ENCODE measurements at regions of chr1 and their contacts with region 1.

Region 1: GRCh38 chr1:26279456-26280332 is at the start of gene SH3BGRL3:
- DNase-seq: peak; percentile 77
- ATAC-seq: peak; percentile 60
- H3K4me3 Mint-ChIP-seq: peak within 1 kb of the TSS; percentile 88
- H3K27ac Mint-ChIP-seq: peak within 1 kb of the TSS; percentile 85
- H3K4me1 Mint-ChIP-seq: peaks cover 82% of the 10 kb centered on the region
- H3K27me3 Mint-ChIP-seq: no peaks in the 10 kb centered on the region
- CTCF ChIP-seq: no peak
- total RNA-seq, gene SH3BGRL3: 265 and 285 TPM in 2 replicates

Region 2: DNA sequence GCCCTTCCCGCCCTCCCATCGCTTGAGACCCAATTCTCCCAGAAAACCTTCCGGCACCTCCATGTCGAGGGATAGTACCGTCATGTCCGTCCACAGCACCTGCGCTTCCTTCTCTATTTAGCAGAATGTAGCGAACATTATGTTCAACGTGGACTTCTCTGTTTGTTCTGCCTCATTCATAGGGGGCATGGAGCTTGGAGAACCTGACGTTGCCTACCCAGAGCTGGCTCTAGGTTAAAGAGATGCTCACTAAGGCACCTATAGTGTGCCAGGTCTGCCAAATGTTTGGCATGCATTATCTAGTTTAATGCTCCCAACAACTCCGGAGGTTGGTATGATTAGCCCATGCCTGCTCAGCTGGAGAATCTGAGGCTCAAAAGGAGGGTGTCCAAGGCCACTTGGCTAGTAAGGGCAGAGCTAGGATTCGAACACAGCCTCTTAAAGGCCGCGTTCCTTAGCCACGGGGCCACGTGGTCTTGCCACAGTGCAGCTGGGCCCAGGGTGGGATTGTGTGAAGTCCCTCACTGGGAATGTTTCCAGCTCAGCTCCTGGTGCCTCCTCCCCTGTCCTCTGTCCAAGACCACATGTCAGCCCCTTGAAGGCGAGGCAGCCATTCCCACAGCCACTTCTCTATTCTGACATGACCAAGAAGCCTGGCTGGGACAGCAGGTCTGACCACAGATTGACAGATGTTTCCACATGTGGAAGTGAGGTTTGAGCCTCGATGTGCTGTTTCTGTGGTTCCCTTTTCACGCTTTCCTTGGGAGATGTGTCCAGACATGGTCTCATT is 1407.4 kb before region 1 on chr1:
- CTCF ChIA-PET with region 1: no interaction called
- POLR2A ChIA-PET with region 1: no interaction called
- intact Hi-C with region 1: no loop called
- DNase-seq: no peak
- ATAC-seq: no peak
- H3K4me3 Mint-ChIP-seq: no peak overlapping the region
- H3K27ac Mint-ChIP-seq: no peak overlapping the region
- H3K4me1 Mint-ChIP-seq: peaks cover 18% of the 10 kb centered on the region
- H3K27me3 Mint-ChIP-seq: peaks cover 27% of the 10 kb centered on the region
- CTCF ChIP-seq: no peak

Region 3: GRCh38 chr1:26233903-26234643 is 45.6 kb before region 1 on chr1 and contains the start of gene CEP85:
- CTCF ChIA-PET with region 1: interaction called, 17 read pairs
- POLR2A ChIA-PET with region 1: interaction called, 10 read pairs
- intact Hi-C with region 1: loop called (anchors 5 kb)
- DNase-seq: peak; percentile 94
- ATAC-seq: peak; percentile 88
- H3K4me3 Mint-ChIP-seq: peak within 1 kb of the TSS; percentile 98
- H3K27ac Mint-ChIP-seq: peak within 1 kb of the TSS; percentile 94
- H3K4me1 Mint-ChIP-seq: peaks cover 34% of the 10 kb centered on the region
- H3K27me3 Mint-ChIP-seq: no peaks in the 10 kb centered on the region
- CTCF ChIP-seq: no peak
- total RNA-seq, gene CEP85: 13.8 and 16.4 TPM in 2 replicates

Region 4: GRCh38 chr1:26363549-26364448 is 84.1 kb after region 1 on chr1:
- CTCF ChIA-PET with region 1: interaction called, 26 read pairs
- POLR2A ChIA-PET with region 1: no interaction called
- intact Hi-C with region 1: loop called (anchors 1 kb)
- DNase-seq: peak; percentile 81
- ATAC-seq: peak; percentile 72
- H3K4me3 Mint-ChIP-seq: no peak overlapping the region
- H3K27ac Mint-ChIP-seq: no peak overlapping the region
- H3K4me1 Mint-ChIP-seq: peaks cover 27% of the 10 kb centered on the region
- H3K27me3 Mint-ChIP-seq: peaks cover 24% of the 10 kb centered on the region
- CTCF ChIP-seq: peak; percentile 90

Region 5: DNA sequence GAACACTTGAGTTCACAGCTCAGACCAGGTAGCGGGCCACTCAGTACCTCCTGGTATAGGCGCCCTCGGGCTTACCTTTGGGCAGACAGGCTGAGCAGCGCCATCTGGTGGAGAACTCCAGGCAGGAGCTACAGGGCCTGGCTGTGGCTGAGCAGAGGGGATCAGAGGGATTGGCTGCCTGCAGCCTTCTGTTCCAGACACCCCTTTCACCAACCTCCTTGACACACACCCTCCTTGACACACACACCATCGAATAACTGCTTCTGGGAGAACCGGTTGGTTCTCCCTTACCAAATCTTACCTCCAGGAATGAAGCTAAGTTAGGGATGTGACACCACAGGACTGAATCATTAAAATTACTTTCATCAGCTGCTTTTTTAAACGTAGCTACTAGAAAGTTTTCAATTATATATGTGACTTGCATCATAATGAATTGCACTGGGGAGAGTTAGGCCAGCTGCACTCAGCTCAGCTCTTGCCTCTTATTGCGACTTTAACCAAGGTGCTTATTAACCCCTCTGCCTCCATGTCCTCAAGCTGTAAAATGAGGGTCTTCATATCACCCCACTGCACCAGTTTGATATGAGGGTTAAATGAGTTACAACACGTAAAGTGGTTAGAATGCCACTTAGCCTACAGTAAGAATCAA is 137.5 kb after region 1 on chr1:
- CTCF ChIA-PET with region 1: interaction called, 26 read pairs
- POLR2A ChIA-PET with region 1: no interaction called
- intact Hi-C with region 1: loop called (anchors 1 kb)
- DNase-seq: peak; percentile 67
- ATAC-seq: peak; percentile 99
- H3K4me3 Mint-ChIP-seq: no peak overlapping the region
- H3K27ac Mint-ChIP-seq: no peak overlapping the region
- H3K4me1 Mint-ChIP-seq: no peaks in the 10 kb centered on the region
- H3K27me3 Mint-ChIP-seq: peaks cover 29% of the 10 kb centered on the region
- CTCF ChIP-seq: peak; percentile 35

Region 6: DNA sequence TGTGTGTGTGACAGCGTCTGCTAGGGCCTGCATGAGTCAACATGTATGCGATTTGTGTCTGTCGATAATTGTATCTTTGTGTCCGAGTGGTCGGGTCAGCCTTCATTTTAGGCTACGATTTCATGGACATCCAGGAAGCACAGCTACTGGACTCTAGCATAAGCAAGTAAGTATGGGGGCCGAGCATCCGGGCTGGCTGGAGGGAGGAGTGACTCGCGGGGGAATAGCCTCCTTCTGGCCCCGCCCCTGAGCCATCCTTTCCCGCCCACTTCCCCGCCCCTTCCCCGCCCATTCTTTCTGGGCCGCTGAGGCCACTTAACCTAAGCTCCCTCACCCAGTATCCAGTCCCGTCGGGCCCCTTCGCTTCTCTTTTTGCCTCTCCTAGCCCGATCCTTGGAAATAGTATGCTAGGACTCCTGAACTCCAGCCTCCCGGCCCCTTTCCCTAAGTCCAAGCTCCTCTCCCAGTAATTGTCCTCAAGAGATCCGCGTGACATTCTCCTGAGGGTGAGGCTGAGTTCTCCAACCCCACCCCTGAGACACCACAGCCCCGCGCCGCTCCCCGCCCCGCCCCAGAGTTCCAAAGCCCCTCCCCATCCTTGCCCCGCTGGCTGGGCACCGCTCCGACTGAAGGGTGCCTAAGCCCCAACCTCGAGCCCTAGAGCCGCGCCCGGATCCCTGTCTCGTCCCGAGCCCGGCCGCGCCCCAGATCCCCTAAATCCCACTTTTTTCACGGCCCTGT is 1085.8 kb after region 1 on chr1:
- CTCF ChIA-PET with region 1: no interaction called
- POLR2A ChIA-PET with region 1: no interaction called
- intact Hi-C with region 1: loop called (anchors 10 kb)
- DNase-seq: peak; percentile 68
- ATAC-seq: peak; percentile 71
- H3K4me3 Mint-ChIP-seq: peak overlapping the region; percentile 91
- H3K27ac Mint-ChIP-seq: peak overlapping the region; percentile 68
- H3K4me1 Mint-ChIP-seq: peaks cover 55% of the 10 kb centered on the region
- H3K27me3 Mint-ChIP-seq: no peaks in the 10 kb centered on the region
- CTCF ChIP-seq: no peak

Measured in activated B cell treated with CpG ODN at 0.5 μM for 24 hours (primary cell).